BJ (cell line): ENCODE measurements at regions of chr11 and their contacts with region 1.

Region 1: DNA sequence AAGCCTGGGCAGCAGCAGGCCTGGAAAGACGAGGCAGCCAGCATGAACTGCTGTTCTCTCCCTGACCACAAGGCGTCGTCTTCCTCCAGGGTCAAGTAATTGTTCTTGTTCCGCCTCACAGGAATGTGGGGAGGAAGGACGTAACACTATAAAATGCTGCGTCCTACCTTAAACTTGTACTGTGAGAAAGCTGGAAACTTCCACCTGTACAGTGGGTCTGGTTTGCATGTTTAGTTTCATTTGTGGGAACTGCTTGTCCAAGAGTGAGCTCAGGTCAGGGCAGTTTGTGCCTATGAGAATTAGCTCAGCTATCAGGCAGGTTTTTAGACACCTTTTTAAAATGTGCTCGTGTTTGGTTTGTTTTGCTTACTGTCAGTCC is 55.2 kb downstream of the PANX1 start:
- DNase-seq: no peak
- H3K4me3 ChIP-seq: no peak overlapping the region
- H3K27me3 ChIP-seq: no peaks in the 10 kb centered on the region
- CTCF ChIP-seq: peak; percentile 57

Region 2: DNA sequence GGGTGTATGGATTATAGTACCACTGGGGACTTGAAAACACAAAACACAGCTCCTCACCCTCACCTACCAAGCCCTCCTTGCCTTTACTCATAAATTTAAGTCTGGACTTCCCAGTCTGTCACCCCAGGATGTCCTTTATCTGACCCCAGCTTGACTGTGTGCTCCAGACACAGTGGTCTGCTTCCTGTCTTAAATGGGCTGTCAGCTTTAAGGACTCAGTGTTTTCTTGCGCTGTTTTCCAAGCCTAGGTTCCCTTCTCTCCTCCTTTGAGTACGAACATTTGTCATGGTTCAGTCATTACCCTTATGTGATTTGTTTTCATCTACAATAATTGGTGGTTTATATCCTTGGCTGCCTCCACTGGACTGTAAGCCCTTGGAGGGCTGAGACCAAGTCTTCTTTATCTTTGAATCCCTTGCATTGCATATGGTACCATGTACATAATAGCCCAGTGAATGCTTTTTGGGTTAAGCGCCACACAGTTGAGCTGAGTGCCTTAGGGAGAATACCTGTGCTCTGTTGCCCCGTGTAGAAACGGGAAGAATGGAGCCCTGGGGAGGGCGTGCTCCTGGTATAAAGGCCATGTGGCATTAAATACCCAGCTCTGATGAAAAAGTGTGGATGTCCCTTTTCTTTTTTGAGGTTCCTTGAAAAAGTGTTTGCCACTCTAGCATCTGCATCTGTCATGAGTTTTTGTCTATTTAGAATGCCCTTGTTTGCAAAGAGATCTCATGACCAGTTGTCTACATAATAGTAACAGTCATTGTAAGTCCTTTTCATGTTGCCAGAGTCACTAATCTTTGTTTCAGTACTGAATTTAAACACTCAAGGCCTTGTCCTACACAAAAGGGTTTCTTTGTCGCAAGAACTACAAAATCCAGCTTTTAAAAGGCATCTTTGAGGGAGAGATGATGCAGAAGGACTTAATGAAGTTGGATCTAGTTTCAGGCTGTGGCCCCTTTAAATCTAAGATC is 41.3 kb before region 1 on chr11:
- CTCF ChIA-PET with region 1: no interaction called
- POLR2A ChIA-PET with region 1: no interaction called
- DNase-seq: no peak
- H3K4me3 ChIP-seq: no peak overlapping the region
- H3K27me3 ChIP-seq: no peaks in the 10 kb centered on the region
- CTCF ChIP-seq: no peak

Region 3: DNA sequence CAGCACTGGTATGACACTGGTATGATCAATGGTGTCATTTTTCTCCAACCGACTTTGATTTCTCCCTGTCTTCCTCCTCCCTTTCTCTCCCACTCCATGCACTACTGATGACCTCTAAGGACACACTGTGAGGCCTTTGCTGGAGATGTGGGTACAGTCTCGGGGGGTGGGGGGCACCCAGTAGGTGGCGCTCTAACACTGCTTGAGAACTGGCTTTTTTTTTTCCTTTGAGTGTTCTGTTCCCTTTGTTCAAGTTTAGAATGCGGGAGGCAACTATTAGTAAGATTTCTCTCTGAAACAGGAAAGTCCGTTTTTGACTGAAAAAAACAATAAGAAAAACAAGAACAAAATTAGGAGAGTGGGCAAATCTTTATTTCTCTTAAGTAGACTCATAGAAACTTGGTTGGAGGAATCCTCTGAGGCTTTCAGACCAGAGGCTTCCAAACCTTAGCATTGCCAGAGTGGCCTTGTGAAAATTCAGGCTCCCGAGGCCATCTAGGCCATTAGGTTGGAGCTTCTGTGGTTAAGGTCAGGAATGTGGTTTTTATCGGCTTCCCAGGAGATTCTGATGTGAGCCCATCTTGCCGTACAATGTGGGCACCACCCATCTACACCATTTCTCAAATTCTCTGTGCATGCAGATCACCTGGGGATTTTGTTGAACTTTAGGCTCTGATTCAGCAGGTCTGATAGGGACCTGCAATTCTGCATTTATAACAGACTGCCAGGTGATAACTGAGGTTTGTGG is 12.0 kb before region 1 on chr11:
- CTCF ChIA-PET with region 1: interaction called, 13 read pairs
- POLR2A ChIA-PET with region 1: interaction called, 8 read pairs
- DNase-seq: no peak
- H3K4me3 ChIP-seq: no peak overlapping the region
- H3K27me3 ChIP-seq: no peaks in the 10 kb centered on the region
- CTCF ChIP-seq: peak; percentile 91

Region 4: GRCh38 chr11:94199136-94200130 is 15.6 kb after region 1 on chr11:
- CTCF ChIA-PET with region 1: interaction called, 15 read pairs
- POLR2A ChIA-PET with region 1: no interaction called
- DNase-seq: no peak
- H3K4me3 ChIP-seq: no peak overlapping the region
- H3K27me3 ChIP-seq: no peaks in the 10 kb centered on the region
- CTCF ChIP-seq: no peak